ENCODE measurements at regions of chr1 and their contacts with region 1.

Region 1: GRCh38 chr1:29124366-29125236 is 898 bp upstream of the TMEM200B start:
- DNase-seq: peak; percentile 96

Region 2: DNA sequence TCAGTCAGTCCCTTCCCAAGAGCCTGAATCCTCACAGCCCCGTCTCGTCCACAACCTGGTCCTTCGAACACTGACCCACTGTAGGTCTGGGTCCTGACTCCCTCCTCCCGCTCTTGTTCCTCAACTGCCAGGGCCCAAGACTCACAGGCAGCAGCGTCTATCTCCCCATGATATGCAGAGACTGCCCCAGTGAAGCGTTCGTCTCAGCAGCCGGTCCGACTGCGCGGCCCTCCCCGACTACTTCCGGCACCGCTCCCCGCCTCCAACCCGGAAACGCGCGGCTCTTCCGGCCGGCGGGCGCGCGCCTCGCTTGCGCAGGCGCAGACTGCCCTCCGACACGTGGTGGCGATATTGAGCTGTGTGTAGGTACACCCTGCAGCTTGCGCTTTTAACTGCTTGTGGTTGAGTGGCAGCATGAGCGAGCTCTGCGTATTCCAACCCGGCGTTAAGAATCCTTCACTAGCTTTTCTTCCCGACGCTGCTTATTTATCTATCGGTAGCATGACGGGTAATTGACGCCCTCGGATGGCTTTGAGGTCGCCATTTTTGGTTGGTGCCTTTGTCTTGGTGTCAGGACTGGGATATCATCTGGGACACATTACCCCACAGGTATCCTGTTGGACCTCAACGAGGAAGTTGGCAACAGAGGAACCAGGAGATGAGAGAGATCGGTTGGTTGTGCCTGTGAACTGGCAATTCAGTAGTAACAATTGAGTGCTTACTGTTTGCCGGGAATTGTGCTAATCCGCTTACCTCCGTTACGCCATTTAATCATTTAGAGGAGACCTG is 481.6 kb before region 1 on chr1 and contains the start of gene TAF12:
- intact Hi-C with region 1: no loop called
- DNase-seq: peak; percentile 96
- total RNA-seq, gene TAF12: 14.9 to 16.5 TPM

Region 3: DNA sequence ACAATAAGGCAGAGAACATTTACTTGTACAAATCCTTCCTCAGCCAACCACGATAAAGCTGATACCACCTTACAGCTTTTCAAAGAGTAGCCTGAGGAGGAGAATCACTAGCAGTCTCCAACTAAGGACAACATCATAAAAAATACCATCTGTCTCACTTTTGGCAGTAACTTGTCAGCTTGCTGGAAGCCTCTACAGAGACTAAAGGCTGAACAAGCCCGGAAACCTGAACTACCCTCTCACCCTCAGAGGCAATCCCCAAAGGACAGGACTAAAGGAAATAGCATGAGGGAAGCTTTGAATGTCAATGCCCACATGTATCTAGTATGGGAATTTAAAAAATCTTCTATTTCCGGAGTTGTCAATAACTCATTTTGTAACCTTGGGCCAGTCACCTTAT is 46.5 kb after region 1 on chr1:
- intact Hi-C with region 1: loop called in 1 of 2 experiments (anchors 10 kb)
- DNase-seq: no peak

Measured in posterior vena cava (tissue), 2 donors.